GM10248 (cell line): ENCODE measurements at regions of chr3 and their contacts with region 1.

Region 1: GRCh38 chr3:56347219-56347871 is 120.9 kb downstream of the ERC2 start:
- DNase-seq: no peak
- CTCF ChIP-seq: peak; percentile 14

Region 2: DNA sequence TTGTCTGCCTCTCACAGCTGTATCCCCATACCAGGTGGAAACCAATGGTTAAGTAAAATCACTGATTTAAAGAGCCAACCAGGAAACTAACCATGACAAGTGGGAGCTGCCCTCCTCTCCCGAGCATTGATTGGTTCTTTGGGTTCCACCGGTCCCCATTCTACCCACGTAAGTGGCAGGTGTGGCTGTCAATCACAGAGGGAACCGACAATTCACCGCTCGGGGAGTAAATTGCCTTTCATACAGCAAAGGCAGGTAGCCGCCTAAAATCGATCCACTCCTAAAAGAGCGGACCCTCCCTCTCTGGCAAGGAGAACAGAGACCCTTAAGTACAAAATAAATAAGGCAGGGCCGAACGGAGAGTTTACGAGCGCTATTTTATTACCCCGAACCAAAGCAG is 119.8 kb after region 1 on chr3:
- CTCF ChIA-PET with region 1: no interaction called
- POLR2A ChIA-PET with region 1: no interaction called
- DNase-seq: peak; percentile 27
- CTCF ChIP-seq: no peak

Region 3: DNA sequence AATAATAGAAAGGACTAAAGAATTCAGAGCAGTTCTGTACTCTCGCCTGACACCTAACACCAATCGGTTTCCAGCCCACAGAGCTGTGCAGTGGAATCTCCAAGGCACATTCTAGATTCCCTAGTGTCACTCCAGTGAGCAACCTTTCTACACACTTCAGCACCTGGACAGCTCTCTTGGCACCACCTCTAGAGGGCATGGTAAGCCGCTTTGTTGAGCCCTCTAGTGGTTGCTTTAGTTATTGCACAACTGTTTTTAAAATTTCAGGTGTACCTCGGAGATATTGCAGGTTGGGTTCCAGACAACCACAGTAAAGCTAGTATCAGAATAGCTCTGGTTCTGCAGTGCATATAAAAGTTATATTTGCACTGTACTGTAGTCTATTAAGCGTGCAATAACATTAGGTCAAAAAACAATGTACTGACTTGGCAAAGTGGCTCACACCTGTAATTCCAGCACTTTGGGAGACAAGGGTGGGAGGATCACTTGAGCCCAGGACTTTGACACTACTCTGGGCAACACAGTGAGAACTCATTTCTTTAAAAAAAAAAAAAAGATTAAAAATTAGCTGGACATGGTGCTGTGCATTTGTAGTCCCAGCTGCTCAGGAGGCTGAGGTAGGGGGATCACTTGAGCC is 147.5 kb after region 1 on chr3:
- CTCF ChIA-PET with region 1: interaction called, 13 read pairs
- POLR2A ChIA-PET with region 1: no interaction called
- DNase-seq: peak; percentile 81
- CTCF ChIP-seq: peak; percentile 98

Region 4: GRCh38 chr3:56556908-56557830 is 209.8 kb after region 1 on chr3 and contains the start of gene CCDC66:
- CTCF ChIA-PET with region 1: no interaction called
- POLR2A ChIA-PET with region 1: interaction called, 10 read pairs
- DNase-seq: peak; percentile 95
- CTCF ChIP-seq: peak; percentile 63